ENCODE measurements at regions of chr14 and their contacts with region 1.

Region 1: DNA sequence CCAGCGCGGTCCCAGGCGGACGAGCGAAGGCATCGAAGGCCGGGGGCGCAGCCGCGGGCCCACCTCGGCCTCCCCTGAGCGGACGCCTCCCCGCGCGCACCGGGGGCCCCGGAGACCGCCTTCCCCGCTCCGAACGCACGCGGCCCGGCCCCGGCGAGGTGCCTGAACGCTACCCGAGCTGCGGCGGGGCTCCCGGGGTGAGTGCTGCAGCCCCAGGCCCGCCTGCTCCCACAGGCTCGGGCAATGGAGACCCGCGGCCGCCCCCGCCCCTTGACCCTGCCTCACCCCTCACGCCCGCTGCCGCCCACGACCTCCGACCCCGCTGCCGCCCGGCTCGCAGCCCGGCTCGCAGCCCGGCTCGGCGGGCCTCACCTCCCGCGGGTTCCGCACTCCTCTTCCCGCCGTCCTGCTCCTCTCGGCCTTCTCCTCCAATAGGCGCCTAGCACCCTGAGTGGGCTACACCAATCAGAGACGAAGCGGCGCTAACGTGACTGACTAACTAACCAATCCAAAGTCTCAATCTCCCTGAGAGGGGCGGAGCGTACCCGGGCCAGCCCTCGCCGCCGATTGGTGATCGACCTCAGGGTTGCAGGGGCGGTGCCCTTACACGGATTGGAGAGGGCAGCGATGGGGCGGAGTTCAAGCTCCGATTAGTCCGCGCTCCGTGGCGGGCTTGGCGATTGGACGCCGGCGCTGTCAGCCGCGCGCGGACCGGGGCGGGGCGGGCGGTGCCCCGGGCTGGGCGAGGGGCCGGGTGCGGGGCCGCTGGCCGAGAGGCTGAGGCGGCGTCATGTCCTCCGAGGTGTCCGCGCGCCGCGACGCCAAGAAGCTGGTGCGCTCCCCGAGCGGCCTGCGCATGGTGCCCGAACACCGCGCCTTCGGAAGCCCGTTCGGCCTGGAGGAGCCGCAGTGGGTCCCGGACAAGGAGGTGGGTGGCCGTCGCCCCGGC is at the starts of genes XRCC3 and ZFYVE21:
- DNase-seq: peak; percentile 100
- H3K4me3 ChIP-seq: peak within 1 kb of the TSS; percentile 32 to 75 (median 58)
- H3K27ac ChIP-seq: peak within 1 kb of the TSS; percentile 38
- H3K4me1 ChIP-seq: peaks cover 30% of the 10 kb centered on the region
- H3K27me3 ChIP-seq: no peaks in the 10 kb centered on the region
- CTCF ChIP-seq: no peak
- POLR2A ChIP-seq: no peak
- total RNA-seq, gene XRCC3: 25.1 and 27.2 TPM in 2 replicates
- total RNA-seq, gene ZFYVE21: 54.5 and 55.8 TPM in 2 replicates

Region 2: DNA sequence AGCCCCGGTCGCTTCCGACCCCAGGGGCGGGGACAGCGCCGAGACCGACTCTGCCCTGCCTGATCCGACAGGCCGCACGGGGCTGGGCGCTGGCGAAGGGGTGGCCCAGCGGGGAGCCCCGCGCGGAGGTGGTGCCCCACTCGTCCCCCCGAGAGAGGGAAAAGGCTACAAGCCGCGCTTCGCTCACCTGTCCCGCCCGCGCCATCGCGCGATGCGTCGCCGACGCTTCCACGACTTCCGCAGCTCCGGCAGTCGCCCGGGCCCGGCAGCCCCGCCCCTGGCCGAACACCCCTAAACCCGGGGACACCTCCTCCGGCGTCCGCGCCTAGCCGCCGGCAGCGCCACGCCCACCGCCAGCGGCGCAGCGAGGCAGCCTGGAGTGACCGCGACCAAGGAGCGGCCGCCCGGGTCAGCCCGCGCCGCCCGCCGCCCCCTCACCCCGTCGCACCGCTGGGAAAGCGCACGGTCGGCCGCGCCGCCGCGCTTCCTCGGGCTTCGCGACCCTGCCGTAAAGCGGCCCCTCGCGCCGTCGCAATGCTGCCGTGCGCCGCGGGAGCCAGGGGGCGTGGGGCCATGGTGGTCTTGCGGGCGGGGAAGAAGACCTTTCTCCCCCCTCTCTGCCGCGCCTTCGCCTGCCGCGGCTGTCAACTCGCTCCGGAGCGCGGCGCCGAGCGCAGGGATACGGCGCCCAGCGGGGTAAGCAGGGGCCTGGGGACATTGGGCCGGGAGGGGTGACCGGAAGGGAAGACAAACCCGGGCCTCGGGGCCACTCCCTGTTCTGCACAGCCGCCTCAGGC is 152.7 kb before region 1 on chr14 and contains the starts of genes BAG5 and COA8:
- CTCF ChIA-PET with region 1: no interaction called
- POLR2A ChIA-PET with region 1: no interaction called
- dilution Hi-C with region 1: no loop called
- intact Hi-C with region 1: loop called (anchors 1 kb)
- DNase-seq: peak; percentile 86
- H3K4me3 ChIP-seq: peak within 1 kb of the TSS; percentile 61 to 97 (median 95)
- H3K27ac ChIP-seq: peak within 1 kb of the TSS; percentile 94
- H3K4me1 ChIP-seq: peaks cover 23% of the 10 kb centered on the region
- H3K27me3 ChIP-seq: no peaks in the 10 kb centered on the region
- CTCF ChIP-seq: no peak
- POLR2A ChIP-seq: peak; percentile 36
- total RNA-seq, gene BAG5: 28.4 and 32.5 TPM in 2 replicates
- total RNA-seq, gene COA8: 46.4 and 52.6 TPM in 2 replicates

Region 3: DNA sequence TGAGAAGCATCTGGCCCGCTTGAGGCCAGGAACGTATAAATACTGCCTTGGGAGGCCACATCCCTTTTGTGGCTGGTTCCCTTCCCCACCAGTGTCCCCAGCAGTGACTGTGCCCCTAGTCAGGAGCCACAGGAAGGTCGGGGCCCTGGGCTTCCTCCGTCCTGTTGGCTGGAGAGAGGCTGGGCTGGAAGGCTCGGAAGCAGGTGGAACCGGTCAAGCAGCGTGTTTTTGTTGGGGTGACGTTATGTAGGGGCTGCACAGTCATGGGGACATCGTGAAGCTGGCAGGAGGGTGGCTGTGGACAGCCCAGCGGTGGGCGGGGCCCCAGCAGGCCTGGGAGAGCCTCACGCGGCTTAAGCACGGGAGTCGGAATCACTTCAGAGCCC is 10.2 kb before region 1 on chr14:
- CTCF ChIA-PET with region 1: interaction called, 7 read pairs
- POLR2A ChIA-PET with region 1: no interaction called
- dilution Hi-C with region 1: no loop called
- intact Hi-C with region 1: loop called (anchors 1 kb)
- DNase-seq: peak; percentile 86
- H3K4me3 ChIP-seq: no peak overlapping the region
- H3K27ac ChIP-seq: peak overlapping the region; percentile 77
- H3K4me1 ChIP-seq: peaks cover 35% of the 10 kb centered on the region
- H3K27me3 ChIP-seq: no peaks in the 10 kb centered on the region
- CTCF ChIP-seq: no peak
- POLR2A ChIP-seq: no peak

Region 4: DNA sequence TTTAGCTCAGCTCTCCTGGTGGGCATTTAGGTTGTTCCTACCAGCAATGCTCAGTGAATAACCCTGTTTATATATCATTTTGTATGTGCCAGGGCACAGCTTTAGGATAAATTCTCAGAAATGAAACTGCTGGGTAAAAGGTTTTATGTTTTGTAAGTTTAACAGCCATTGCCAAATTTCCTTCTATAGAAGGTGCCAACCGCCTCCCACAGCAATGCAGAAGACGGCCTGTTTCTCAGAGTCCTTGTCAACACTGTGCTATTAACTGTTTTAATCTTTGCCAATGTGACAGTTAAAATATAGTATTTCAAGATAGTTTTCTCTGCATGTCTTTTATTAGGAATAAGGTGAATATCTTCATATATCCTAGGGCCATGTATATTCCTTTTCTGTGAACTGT is 67.0 kb after region 1 on chr14:
- CTCF ChIA-PET with region 1: no interaction called
- POLR2A ChIA-PET with region 1: no interaction called
- dilution Hi-C with region 1: no loop called
- intact Hi-C with region 1: no loop called
- DNase-seq: no peak
- H3K4me3 ChIP-seq: no peak overlapping the region
- H3K27ac ChIP-seq: no peak overlapping the region
- H3K4me1 ChIP-seq: no peaks in the 10 kb centered on the region
- H3K27me3 ChIP-seq: no peaks in the 10 kb centered on the region
- CTCF ChIP-seq: no peak
- POLR2A ChIP-seq: no peak

Region 5: DNA sequence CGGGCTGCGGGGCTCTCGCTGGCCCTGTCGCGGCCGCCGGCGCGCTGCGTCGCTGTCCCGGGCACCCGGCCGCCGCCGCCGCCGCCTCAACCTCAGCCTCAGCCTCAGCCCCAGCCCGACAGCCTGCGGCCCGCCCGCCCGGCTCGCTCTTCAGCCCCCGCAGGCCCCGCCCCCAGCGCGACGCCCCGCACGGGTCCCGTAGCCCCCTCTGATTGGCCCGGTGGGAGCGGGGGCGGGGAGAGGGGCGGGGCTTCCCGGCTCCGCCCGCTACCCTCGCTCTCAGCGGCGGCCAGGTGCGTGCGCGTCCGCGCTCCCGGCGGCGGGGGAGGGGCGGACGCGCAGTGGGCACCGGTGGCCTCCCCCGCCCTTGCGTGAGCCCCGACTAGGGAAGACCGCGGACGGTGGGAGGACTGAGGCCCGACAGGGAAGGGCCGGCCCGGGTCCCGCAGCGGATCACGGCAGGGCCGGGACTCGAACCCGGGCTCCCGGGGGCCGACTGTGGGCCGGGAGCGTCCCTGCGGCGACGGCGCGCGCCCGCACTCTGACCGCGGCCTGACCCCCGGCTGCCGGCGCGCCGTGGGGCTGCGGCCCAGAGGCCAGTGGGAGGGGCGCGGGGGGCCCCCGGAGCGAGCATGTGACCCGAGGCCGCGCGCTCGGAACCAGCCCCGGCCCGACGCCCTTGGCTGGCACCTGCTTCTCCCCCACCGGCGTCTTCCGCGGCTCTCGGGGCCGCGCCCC is 132.3 kb after region 1 on chr14 and contains the start of gene PPP1R13B:
- CTCF ChIA-PET with region 1: no interaction called
- POLR2A ChIA-PET with region 1: no interaction called
- dilution Hi-C with region 1: no loop called
- intact Hi-C with region 1: loop called (anchors 5 kb)
- DNase-seq: peak; percentile 82
- H3K4me3 ChIP-seq: peak within 1 kb of the TSS; percentile 45 to 83 (median 77)
- H3K27ac ChIP-seq: no peak within 1 kb of the TSS
- H3K4me1 ChIP-seq: peaks cover 15% of the 10 kb centered on the region
- H3K27me3 ChIP-seq: no peaks in the 10 kb centered on the region
- CTCF ChIP-seq: no peak
- POLR2A ChIP-seq: peak; percentile 45
- total RNA-seq, gene PPP1R13B: 29.3 and 30.0 TPM in 2 replicates